Body of pancreas (tissue), 4 donors: ENCODE measurements at regions of chr9 and their contacts with region 1.

Region 1: DNA sequence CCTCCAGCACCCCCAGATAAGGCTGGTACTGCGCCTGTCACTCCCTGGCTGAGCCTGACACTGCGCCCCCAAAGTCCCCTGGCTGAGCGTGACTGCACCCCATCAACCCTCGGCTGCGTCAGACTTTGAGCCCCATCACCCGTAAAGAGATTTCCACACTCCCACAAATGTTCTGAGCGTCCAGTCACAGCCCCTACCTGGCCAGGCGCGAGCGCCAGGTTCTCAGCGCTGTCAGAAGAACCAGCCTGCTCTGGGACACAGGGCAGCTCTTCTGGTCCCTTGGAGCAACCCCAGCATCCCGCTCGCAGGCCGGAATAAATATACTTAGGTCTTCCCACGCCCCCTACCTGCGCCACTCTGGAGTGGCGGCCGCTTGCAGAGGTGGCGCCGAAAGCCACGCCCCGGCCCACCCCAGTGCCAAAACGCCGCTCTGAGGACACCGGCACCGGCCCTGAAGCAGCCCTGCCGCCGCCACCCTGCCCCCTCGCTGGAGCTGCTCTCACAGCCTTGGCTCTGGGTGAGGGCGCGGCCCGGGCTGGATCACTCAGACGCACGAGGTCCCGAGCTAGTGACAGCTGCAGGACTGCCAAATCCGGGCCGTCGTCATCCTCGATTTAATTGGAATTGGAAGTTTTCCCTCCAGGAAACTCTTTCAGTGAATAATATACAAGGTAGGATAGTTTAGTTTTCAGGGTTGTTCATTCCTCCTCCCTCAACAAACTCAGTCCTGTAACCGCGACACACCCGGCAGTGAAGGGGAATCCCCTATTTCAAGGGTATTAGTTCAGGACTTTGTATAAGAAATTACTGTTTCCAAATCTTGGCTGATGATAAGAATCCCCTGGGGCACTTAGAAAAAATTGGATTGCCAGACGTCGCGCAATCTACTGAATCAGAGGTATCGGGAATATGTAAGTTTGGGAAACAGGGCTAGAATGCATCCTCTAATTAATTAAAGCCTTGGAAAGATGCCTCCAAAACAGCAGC is 1.2 kb upstream of the CEMIP2 start:
- DNase-seq: peak; percentile 95 to 98 (median 96)
- ATAC-seq: peak; percentile 77
- H3K4me3 ChIP-seq: peak overlapping the region in 1 of 2 donors; percentile 6
- H3K27ac ChIP-seq: peak overlapping the region; percentile 94 to 99 (median 97)
- H3K4me1 ChIP-seq: peaks cover 43% of the 10 kb centered on the region
- H3K27me3 ChIP-seq: no peaks in the 10 kb centered on the region
- CTCF ChIP-seq: peak in 6 of 7 experiments; percentile 37 to 93 (median 76)
- POLR2A ChIP-seq: peak; percentile 56 to 67 (median 67)

Region 2: GRCh38 chr9:71604197-71605063 is 165.0 kb before region 1 on chr9:
- intact Hi-C with region 1: loop called (anchors 10 kb)
- DNase-seq: peak; percentile 77 to 81 (median 78)
- ATAC-seq: peak; percentile 70
- H3K4me3 ChIP-seq: no peak overlapping the region
- H3K27ac ChIP-seq: no peak overlapping the region
- H3K4me1 ChIP-seq: no peaks in the 10 kb centered on the region
- H3K27me3 ChIP-seq: no peaks in the 10 kb centered on the region
- CTCF ChIP-seq: peak; percentile 43 to 80 (median 73)
- POLR2A ChIP-seq: no peak

Region 3: GRCh38 chr9:71703172-71703872 is 66.1 kb before region 1 on chr9:
- intact Hi-C with region 1: no loop called
- DNase-seq: no peak
- ATAC-seq: no peak
- H3K4me3 ChIP-seq: no peak overlapping the region
- H3K27ac ChIP-seq: no peak overlapping the region
- H3K4me1 ChIP-seq: no peaks in the 10 kb centered on the region
- H3K27me3 ChIP-seq: no peaks in the 10 kb centered on the region
- CTCF ChIP-seq: no peak
- POLR2A ChIP-seq: no peak

Region 4: DNA sequence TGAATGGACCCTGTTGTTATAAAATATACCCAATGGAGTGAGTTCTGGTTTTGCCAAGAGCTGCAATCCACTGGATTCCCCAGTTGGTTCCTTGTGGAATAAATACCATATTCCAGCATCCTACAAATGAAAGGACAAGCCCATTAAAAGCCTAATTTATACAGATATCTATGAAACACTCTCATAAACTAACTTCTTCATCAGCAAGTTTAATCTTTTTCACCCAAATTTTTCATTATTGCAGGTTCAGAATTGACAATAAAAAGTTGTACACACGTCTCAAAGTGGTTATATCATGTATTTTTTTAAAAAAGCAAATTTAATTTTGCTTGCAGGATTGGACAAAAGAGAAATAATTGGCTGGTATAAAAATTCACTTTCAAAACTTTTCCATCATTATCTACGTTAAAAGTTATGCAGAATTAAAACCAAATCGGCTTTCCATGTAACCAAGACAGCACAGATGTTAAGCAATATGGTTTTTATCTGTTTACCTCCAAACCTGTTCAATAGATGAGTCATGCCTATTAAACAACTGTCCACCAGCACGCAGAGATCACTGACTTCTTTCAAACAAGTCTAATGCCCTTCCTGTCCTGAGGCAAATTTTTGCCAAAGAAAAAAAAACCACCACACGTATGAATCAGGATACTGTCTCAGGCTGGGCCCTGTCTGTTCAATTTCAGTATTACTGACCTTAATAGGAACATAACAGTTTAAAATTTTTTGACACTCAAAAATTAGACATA is 43.7 kb before region 1 on chr9:
- intact Hi-C with region 1: loop called (anchors 10 kb)
- DNase-seq: peak in 1 of 4 donors; percentile 35
- ATAC-seq: peak; percentile 84
- H3K4me3 ChIP-seq: no peak overlapping the region
- H3K27ac ChIP-seq: no peak overlapping the region
- H3K4me1 ChIP-seq: peaks cover 6% of the 10 kb centered on the region
- H3K27me3 ChIP-seq: no peaks in the 10 kb centered on the region
- CTCF ChIP-seq: no peak
- POLR2A ChIP-seq: no peak

Region 5: GRCh38 chr9:71955300-71955915 is 185.9 kb after region 1 on chr9:
- intact Hi-C with region 1: no loop called
- DNase-seq: no peak
- ATAC-seq: no peak
- H3K4me3 ChIP-seq: no peak overlapping the region
- H3K27ac ChIP-seq: no peak overlapping the region
- H3K4me1 ChIP-seq: no peaks in the 10 kb centered on the region
- H3K27me3 ChIP-seq: no peaks in the 10 kb centered on the region
- CTCF ChIP-seq: no peak
- POLR2A ChIP-seq: no peak